CD8-positive, alpha-beta T cell (primary cell): ENCODE measurements at regions of chr14 and their contacts with region 1.

Region 1: GRCh38 chr14:90758028-90758889 is 58.0 kb downstream of the TTC7B start:
- DNase-seq: peak; percentile 89 to 98 (median 95)
- ATAC-seq: peak; percentile 89
- H3K4me3 ChIP-seq: peak overlapping the region; percentile 58 to 74
- H3K4me3 Mint-ChIP-seq: peak overlapping the region; percentile 80
- H3K27ac ChIP-seq: peak overlapping the region; percentile 54 to 72
- H3K27ac Mint-ChIP-seq: peak overlapping the region; percentile 85
- H3K4me1 ChIP-seq: peaks cover 16% of the 10 kb centered on the region
- H3K4me1 Mint-ChIP-seq: peaks cover 18% of the 10 kb centered on the region
- H3K27me3 ChIP-seq: no peaks in the 10 kb centered on the region
- H3K27me3 Mint-ChIP-seq: peaks cover 3% of the 10 kb centered on the region
- CTCF ChIP-seq: peak; percentile 68

Region 2: GRCh38 chr14:90319173-90319572 is 439.1 kb before region 1 on chr14:
- CTCF ChIA-PET with region 1: no interaction called
- POLR2A ChIA-PET with region 1: no interaction called
- intact Hi-C with region 1: no loop called
- DNase-seq: no peak
- ATAC-seq: no peak
- H3K4me3 ChIP-seq: no peak overlapping the region
- H3K4me3 Mint-ChIP-seq: no peak overlapping the region
- H3K27ac ChIP-seq: no peak overlapping the region
- H3K27ac Mint-ChIP-seq: no peak overlapping the region
- H3K4me1 ChIP-seq: peaks cover 8% of the 10 kb centered on the region
- H3K4me1 Mint-ChIP-seq: peaks cover 28% of the 10 kb centered on the region
- H3K27me3 ChIP-seq: no peaks in the 10 kb centered on the region
- H3K27me3 Mint-ChIP-seq: no peaks in the 10 kb centered on the region
- CTCF ChIP-seq: no peak

Region 3: GRCh38 chr14:90331497-90332435 is 426.5 kb before region 1 on chr14 and contains the start of gene NRDE2:
- CTCF ChIA-PET with region 1: no interaction called
- POLR2A ChIA-PET with region 1: interaction called, 3 read pairs
- intact Hi-C with region 1: loop called in 1 of 2 experiments (anchors 1 kb)
- DNase-seq: peak; percentile 81 to 97 (median 93)
- ATAC-seq: peak; percentile 95
- H3K4me3 ChIP-seq: peak within 1 kb of the TSS; percentile 86 to 90
- H3K4me3 Mint-ChIP-seq: peak within 1 kb of the TSS; percentile 90
- H3K27ac ChIP-seq: peak within 1 kb of the TSS; percentile 63 to 88
- H3K27ac Mint-ChIP-seq: peak within 1 kb of the TSS; percentile 94
- H3K4me1 ChIP-seq: peaks cover 21% of the 10 kb centered on the region
- H3K4me1 Mint-ChIP-seq: peaks cover 32% of the 10 kb centered on the region
- H3K27me3 ChIP-seq: no peaks in the 10 kb centered on the region
- H3K27me3 Mint-ChIP-seq: peaks cover 11% of the 10 kb centered on the region
- CTCF ChIP-seq: no peak
- total RNA-seq, gene NRDE2: 22.8 to 23.0 TPM

Region 4: GRCh38 chr14:90399541-90400444 is 358.5 kb before region 1 on chr14:
- CTCF ChIA-PET with region 1: interaction called, 10 read pairs
- POLR2A ChIA-PET with region 1: interaction called, 3 read pairs
- intact Hi-C with region 1: loop called (anchors 1 kb)
- DNase-seq: peak; percentile 73 to 95 (median 85)
- ATAC-seq: peak; percentile 47
- H3K4me3 ChIP-seq: peak overlapping the region; percentile 59 to 75
- H3K4me3 Mint-ChIP-seq: peak overlapping the region; percentile 99
- H3K27ac ChIP-seq: peak overlapping the region; percentile 89
- H3K27ac Mint-ChIP-seq: peak overlapping the region; percentile 99
- H3K4me1 ChIP-seq: peaks cover 56% of the 10 kb centered on the region
- H3K4me1 Mint-ChIP-seq: peaks cover 60% of the 10 kb centered on the region
- H3K27me3 ChIP-seq: no peaks in the 10 kb centered on the region
- H3K27me3 Mint-ChIP-seq: no peaks in the 10 kb centered on the region
- CTCF ChIP-seq: peak; percentile 100

Region 5: GRCh38 chr14:90645842-90646443 is 112.3 kb before region 1 on chr14:
- CTCF ChIA-PET with region 1: no interaction called
- POLR2A ChIA-PET with region 1: no interaction called
- intact Hi-C with region 1: no loop called
- DNase-seq: no peak
- ATAC-seq: no peak
- H3K4me3 ChIP-seq: no peak overlapping the region
- H3K4me3 Mint-ChIP-seq: no peak overlapping the region
- H3K27ac ChIP-seq: no peak overlapping the region
- H3K27ac Mint-ChIP-seq: no peak overlapping the region
- H3K4me1 ChIP-seq: no peaks in the 10 kb centered on the region
- H3K4me1 Mint-ChIP-seq: no peaks in the 10 kb centered on the region
- H3K27me3 ChIP-seq: no peaks in the 10 kb centered on the region
- H3K27me3 Mint-ChIP-seq: no peaks in the 10 kb centered on the region
- CTCF ChIP-seq: no peak

Region 6: DNA sequence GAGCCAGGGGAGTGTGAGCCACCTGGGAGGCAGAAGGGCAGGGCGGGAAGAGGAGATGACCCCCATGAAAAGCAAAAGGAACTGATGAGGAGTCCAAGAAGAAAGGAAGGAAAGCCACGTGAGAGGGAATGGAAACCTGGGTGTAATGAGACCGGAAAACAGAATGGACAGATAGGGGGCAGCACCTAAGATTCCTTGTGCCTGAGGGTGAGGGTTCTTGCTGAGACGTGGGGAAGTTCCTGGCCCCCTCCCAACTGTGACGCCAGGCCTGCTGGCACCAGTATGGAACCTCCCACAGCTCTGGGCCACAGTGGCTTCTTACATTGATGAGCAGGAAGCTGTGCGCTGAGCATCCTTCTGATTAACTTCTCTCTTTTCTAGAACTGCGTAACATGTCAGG is 27.2 kb after region 1 on chr14:
- CTCF ChIA-PET with region 1: no interaction called
- POLR2A ChIA-PET with region 1: no interaction called
- intact Hi-C with region 1: no loop called
- DNase-seq: peak in 1 of 9 experiments; percentile 15
- ATAC-seq: no peak
- H3K4me3 ChIP-seq: no peak overlapping the region
- H3K4me3 Mint-ChIP-seq: no peak overlapping the region
- H3K27ac ChIP-seq: no peak overlapping the region
- H3K27ac Mint-ChIP-seq: no peak overlapping the region
- H3K4me1 ChIP-seq: no peaks in the 10 kb centered on the region
- H3K4me1 Mint-ChIP-seq: no peaks in the 10 kb centered on the region
- H3K27me3 ChIP-seq: no peaks in the 10 kb centered on the region
- H3K27me3 Mint-ChIP-seq: no peaks in the 10 kb centered on the region
- CTCF ChIP-seq: no peak

Region 7: DNA sequence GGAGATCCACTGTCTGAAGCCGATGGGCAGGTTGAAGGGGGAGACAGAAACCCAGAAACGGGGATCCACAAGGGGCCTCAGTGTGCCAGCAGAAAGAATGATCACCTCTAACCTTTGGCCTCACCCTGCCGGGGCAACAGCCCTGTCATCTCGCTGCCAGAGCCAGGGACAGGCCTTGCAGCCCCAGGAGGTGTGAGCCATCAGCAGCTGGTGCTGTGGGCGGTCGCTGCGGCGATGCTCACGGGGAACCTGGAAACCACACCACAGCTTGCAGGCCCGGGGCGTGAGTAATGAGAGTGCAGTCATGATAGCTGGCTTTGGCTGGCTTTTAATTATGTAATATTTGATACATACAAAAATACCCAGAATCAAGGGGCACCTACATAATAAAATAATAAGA is 62.7 kb after region 1 on chr14:
- CTCF ChIA-PET with region 1: no interaction called
- POLR2A ChIA-PET with region 1: interaction called, 3 read pairs
- intact Hi-C with region 1: loop called (anchors 2 kb)
- DNase-seq: peak; percentile 37 to 83 (median 64)
- ATAC-seq: peak; percentile 78
- H3K4me3 ChIP-seq: no peak overlapping the region
- H3K4me3 Mint-ChIP-seq: no peak overlapping the region
- H3K27ac ChIP-seq: no peak overlapping the region
- H3K27ac Mint-ChIP-seq: no peak overlapping the region
- H3K4me1 ChIP-seq: peaks cover 14% of the 10 kb centered on the region
- H3K4me1 Mint-ChIP-seq: peaks cover 13% of the 10 kb centered on the region
- H3K27me3 ChIP-seq: peaks cover 0 to 6% of the 10 kb centered on the region in 2 experiments
- H3K27me3 Mint-ChIP-seq: peaks cover 7% of the 10 kb centered on the region
- CTCF ChIP-seq: no peak

Region 8: DNA sequence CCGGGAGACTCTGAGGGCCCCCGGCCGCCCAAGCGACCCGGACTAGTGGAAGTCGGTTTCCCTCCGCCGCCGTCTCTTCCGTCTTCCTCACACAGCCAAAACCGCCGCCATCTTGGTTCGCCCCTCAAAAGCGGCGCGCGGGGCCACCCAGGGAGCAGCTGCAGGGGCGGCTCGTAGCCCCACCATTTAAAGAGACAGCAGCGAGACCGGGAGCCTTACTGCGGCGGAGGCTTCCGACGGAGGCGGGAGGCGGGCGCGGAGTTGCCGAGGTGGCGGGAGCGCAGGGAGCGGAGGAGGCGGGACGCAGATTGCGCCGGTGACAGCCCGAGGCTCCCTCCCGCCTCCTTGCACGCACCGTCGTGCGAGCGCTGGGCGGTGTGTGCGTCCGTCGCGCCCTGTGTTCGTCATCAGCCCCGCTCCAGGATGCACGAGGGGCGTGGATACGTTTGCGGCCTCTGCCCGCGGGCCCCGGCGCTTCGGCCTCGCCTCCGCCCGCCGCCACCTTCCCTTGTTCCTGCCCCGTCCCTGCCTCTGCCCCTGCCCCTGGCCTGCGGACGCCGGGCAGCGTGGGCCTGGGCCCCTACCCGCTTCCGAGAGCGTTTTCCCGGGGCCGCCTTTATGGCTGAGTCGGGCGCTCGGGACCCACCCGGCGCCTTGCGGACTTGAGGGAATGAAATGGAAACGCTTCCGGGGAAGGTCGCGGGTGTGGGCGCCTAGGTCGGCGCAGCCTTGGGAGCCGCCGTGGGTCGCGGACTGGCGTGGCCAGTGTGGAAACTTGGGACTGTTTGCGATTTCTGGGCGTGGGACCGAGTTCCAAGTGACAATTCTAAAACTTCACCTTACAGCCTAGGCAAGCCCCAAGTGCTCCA is 752.1 kb after region 1 on chr14 and contains the start of gene PPP4R3A:
- CTCF ChIA-PET with region 1: no interaction called
- POLR2A ChIA-PET with region 1: no interaction called
- intact Hi-C with region 1: loop called in 1 of 2 experiments (anchors 5 kb)
- DNase-seq: peak; percentile 84 to 99 (median 93)
- ATAC-seq: peak; percentile 86
- H3K4me3 ChIP-seq: peak within 1 kb of the TSS; percentile 48 to 96
- H3K4me3 Mint-ChIP-seq: peak within 1 kb of the TSS; percentile 100
- H3K27ac ChIP-seq: peak within 1 kb of the TSS; percentile 94 to 98
- H3K27ac Mint-ChIP-seq: peak within 1 kb of the TSS; percentile 100
- H3K4me1 ChIP-seq: peaks cover 26% of the 10 kb centered on the region
- H3K4me1 Mint-ChIP-seq: peaks cover 32% of the 10 kb centered on the region
- H3K27me3 ChIP-seq: no peaks in the 10 kb centered on the region
- H3K27me3 Mint-ChIP-seq: no peaks in the 10 kb centered on the region
- CTCF ChIP-seq: no peak
- total RNA-seq, gene PPP4R3A: 279 to 285 TPM